Activated CD4-positive, alpha-beta T cell treated with anti-CD3 and anti-CD28 coated beads, Interleukin-2, amount 10 ng/mL, durations not matched to agents 24 days and 14 days (primary cell): ENCODE measurements at regions of chr2 and their contacts with region 1.

Region 1: GRCh38 chr2:74529357-74530238 is at the starts of genes AUP1 and HTRA2:
- DNase-seq: peak; percentile 97
- H3K4me3 Mint-ChIP-seq: peak within 1 kb of the TSS; percentile 96
- H3K27ac Mint-ChIP-seq: peak within 1 kb of the TSS; percentile 96
- H3K4me1 Mint-ChIP-seq: peaks cover 35% of the 10 kb centered on the region
- H3K27me3 Mint-ChIP-seq: no peaks in the 10 kb centered on the region
- total RNA-seq, gene AUP1: 170 and 173 TPM in 2 replicates
- total RNA-seq, gene HTRA2: 49.6 and 56.4 TPM in 2 replicates

Region 2: DNA sequence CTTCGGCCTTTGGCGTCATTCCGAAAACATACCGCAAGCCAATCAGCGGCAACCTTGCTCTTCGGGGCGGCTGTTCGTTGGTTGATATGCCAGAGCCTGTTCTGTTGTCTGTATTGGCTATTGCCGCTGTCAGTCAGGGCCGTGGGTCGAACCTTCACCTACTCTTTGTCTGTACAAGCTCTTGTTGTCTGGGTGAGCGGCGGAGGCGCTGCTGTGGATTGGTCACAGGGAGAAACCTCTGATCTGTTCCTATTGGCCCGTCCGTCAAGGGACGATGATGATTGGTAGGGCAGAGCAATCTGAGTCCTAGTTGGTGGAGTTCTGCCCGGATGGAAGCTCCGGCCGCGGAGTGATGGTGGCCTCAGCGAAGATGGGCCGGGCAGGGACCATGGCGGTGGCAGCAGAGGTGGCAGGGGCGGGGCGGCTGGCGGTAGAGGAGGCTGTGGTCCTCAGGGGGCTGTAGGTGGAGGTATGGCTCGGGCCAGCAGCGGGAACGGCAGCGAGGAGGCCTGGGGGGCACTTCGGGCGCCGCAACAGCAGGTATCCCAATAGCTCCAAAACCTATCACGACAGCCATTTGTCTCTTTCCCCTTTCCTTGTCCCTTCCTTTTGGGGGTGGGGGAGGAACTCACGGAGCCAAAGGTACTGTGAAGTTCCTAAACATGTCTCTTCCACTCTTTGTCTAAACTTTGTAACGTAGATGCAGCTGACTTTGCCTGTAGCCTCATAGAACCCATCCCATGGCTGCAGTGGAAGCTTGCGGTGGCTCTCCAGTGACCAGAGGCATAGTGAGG is 71.3 kb before region 1 on chr2 and contains the start of gene WBP1:
- intact Hi-C with region 1: loop called (anchors 1 kb)
- DNase-seq: peak; percentile 99
- H3K4me3 Mint-ChIP-seq: peak within 1 kb of the TSS; percentile 100
- H3K27ac Mint-ChIP-seq: peak within 1 kb of the TSS; percentile 100
- H3K4me1 Mint-ChIP-seq: peaks cover 54% of the 10 kb centered on the region
- H3K27me3 Mint-ChIP-seq: no peaks in the 10 kb centered on the region
- total RNA-seq, gene WBP1: 28.8 and 29.0 TPM in 2 replicates

Region 3: DNA sequence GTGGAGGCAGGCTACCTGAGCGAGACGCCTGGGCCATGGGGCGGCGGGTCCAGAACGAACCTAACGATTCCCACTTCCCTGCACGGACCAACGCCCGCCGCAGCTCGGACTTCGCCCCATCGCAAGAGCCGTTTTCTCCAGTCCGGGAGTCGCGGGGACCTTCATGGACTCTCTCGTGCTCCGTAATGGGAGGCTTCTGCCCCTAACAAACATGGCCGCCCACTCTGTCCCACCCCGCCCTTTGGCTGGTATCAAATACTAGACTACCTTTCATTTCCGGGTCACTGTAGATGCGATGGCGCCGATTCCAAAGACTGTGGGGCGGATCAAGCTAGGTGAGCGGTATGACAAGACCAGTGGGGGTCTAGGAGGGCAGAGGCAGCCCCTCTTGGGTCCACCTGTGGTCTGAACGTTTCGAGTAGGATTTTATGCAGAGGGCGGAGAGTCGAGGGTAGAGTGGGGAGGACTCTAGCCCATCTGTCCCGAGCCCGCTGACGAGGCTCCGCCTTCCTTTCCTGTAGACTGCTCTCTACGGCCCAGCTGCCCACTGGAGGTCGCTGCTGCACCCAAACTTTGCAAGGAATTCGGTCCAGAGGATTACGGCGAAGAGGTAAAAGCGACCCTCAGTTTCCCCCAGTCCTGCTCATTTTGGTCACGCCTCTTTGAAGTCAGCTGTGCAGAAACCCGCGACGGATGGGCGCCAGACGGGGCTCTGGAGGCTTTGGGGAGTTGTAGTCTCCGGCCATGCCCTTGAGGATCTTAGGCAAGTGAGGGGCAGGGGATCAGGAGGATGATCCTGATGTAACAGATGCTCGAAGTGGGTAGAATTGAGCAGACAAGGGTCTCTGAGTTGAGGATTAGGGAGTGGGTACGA is 46.6 kb before region 1 on chr2 and contains the starts of genes CCDC142 and TTC31:
- intact Hi-C with region 1: loop called (anchors 1 kb)
- DNase-seq: peak; percentile 97
- H3K4me3 Mint-ChIP-seq: peak within 1 kb of the TSS; percentile 91
- H3K27ac Mint-ChIP-seq: peak within 1 kb of the TSS; percentile 99
- H3K4me1 Mint-ChIP-seq: peaks cover 33% of the 10 kb centered on the region
- H3K27me3 Mint-ChIP-seq: no peaks in the 10 kb centered on the region
- total RNA-seq, gene CCDC142: 26.5 and 26.9 TPM in 2 replicates
- total RNA-seq, gene TTC31: 27.1 and 31.5 TPM in 2 replicates

Region 4: GRCh38 chr2:74515981-74516633 is 13.5 kb before region 1 on chr2:
- intact Hi-C with region 1: loop called (anchors 1 kb)
- DNase-seq: peak; percentile 93
- H3K4me3 Mint-ChIP-seq: peak overlapping the region; percentile 79
- H3K27ac Mint-ChIP-seq: no peak overlapping the region
- H3K4me1 Mint-ChIP-seq: peaks cover 21% of the 10 kb centered on the region
- H3K27me3 Mint-ChIP-seq: peaks cover 81% of the 10 kb centered on the region

Region 5: GRCh38 chr2:74587664-74588277 is 58.2 kb after region 1 on chr2:
- intact Hi-C with region 1: loop called (anchors 1 kb)
- DNase-seq: peak; percentile 90
- H3K4me3 Mint-ChIP-seq: no peak overlapping the region
- H3K27ac Mint-ChIP-seq: peak overlapping the region; percentile 49
- H3K4me1 Mint-ChIP-seq: peaks cover 27% of the 10 kb centered on the region
- H3K27me3 Mint-ChIP-seq: peaks cover 22% of the 10 kb centered on the region

Region 6: GRCh38 chr2:75064691-75065396 is 535.2 kb after region 1 on chr2:
- intact Hi-C with region 1: no loop called
- DNase-seq: peak; percentile 84
- H3K4me3 Mint-ChIP-seq: no peak overlapping the region
- H3K27ac Mint-ChIP-seq: no peak overlapping the region
- H3K4me1 Mint-ChIP-seq: no peaks in the 10 kb centered on the region
- H3K27me3 Mint-ChIP-seq: peaks cover 2% of the 10 kb centered on the region